ENCODE measurements at regions of chr5 and their contacts with region 1.

Region 1: GRCh38 chr5:35852084-35852734 is 4.5 kb upstream of the IL7R start:
- DNase-seq: no peak
- ATAC-seq: no peak

Region 2: GRCh38 chr5:35753490-35753889 is 98.7 kb before region 1 on chr5:
- intact Hi-C with region 1: no loop called
- DNase-seq: no peak
- ATAC-seq: no peak

Region 3: DNA sequence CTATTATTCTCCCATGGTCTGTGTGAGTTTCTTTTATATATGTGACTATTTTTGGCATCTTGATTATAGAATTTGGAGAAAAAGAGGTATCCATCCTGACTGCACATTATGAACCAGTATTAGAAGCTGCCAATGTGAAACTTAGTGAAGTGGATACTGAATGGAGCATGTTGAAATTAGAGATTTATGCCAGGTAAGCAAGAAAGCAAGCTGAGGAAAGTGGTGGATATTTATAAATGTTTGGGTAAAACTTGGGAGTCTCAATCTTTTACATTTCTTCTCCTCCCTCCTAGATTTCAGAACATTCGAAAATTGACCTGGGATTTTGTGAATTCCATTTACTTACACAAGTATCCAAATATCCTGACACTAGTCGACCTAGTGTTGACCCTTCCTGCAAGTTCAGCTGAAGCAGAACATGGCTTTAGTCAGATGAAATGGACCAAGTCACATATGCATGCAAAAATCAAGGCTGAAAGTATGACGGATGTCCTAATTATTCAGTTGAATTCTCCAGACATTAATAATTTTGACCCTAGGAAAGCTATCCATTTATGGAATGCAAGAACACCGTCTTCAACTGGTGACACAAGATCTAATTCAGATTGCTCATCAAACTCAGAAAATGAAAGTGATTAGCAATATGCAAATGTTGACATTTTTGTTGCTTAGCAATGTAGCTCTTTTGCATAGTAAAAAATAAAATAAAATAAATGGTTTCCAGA is 62.3 kb before region 1 on chr5:
- intact Hi-C with region 1: loop called (anchors 10 kb)
- DNase-seq: no peak
- ATAC-seq: no peak